Left colon (tissue), 2 donors: ENCODE measurements at regions of chr15 and their contacts with region 1.

Region 1: GRCh38 chr15:74615508-74616365 is at the start of gene CLK3:
- DNase-seq: peak; percentile 95 to 99
- ATAC-seq: peak; percentile 80
- total RNA-seq, gene CLK3: 90.8 to 92.9 TPM

Region 2: GRCh38 chr15:74519311-74519710 is 96.4 kb before region 1 on chr15:
- intact Hi-C with region 1: no loop called
- DNase-seq: no peak
- ATAC-seq: no peak

Region 3: DNA sequence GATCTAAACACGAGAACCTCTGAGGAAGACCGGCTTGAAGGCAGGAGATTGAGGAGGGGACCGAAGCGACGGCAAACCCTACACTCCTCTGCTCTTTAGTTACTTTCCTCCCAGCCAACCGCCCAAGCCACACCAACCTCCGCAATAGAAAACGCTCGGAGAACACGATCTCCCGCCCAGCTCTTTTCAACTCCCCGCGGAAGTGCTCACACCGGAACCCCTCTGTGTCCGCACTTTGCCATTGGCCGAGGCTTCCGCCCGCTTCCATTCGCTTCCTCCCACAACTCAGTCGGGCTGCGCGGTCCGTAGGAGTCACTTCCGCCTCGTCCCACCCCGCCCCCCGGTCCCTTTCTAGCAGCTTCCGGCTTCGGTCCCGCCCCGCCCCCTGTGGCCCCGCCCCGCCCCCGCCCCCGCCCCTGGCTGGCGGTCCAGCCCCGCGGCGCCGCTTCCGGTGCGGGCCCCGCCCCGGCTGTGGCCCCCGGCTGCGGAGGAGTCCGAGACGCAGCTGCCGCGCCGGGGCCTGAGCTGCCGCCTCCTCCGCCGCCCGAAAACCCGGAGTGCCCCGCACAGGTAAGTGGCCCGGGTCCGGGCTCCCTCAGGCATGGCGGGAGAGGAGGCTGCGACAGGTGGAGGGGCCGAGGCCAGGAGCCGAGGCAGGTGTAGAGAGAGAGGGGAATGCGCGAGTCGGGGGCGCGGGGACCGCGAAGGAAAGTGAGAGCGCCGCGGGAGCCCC is 74.8 kb before region 1 on chr15 and contains the start of gene ARID3B:
- intact Hi-C with region 1: loop called in 1 of 2 experiments (anchors 10 kb)
- DNase-seq: peak; percentile 98 to 99
- ATAC-seq: peak; percentile 95
- total RNA-seq, gene ARID3B: 11.7 to 12.1 TPM

Region 4: DNA sequence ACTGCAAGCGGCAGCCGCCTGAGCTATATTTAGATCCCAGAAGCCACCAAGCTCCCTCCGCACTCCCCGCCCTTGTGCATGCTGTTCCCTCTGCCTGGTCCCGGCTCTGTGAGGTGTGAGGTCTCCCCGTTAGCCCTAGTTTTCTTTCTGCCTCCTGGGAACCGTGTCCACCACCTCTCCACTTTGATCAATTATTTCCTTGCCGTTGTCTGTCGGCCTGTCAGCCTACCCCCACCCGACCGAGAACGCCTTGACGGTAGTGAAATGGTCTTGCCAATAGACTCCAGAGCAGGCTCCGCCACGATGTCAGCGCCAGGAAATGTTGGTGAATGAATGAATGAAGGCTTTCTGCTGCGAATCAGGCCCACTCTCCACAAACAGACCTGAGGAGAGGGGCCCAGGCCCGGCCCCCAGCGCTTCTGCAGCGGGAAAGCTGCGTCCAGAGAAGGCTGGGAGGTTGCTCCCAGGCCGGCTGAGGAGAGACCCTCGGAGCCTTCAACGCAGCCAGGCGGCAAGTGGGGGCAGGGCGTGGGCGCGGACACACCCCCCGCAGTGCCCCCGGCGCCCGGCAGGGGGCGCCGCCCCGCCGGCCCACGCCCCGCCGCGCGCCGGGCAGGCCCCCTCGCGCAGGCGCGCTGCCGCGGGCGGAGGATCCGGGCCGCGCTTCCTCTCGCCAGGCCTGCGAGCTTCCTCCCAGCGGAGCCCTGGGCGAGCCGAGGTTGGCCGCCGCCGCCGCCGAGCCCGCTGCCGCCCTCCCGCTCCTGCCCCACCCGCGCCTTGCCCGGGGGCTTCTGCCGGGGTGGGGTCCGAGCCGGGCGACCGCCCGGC is 165.9 kb after region 1 on chr15 and contains the start of gene CSK:
- intact Hi-C with region 1: no loop called
- DNase-seq: peak in 1 of 2 donors; percentile 80
- ATAC-seq: peak; percentile 55
- total RNA-seq, gene CSK: 84.8 to 96.9 TPM